IMR-90 (cell line): ENCODE measurements at regions of chr6 and their contacts with region 1.

Region 1: GRCh38 chr6:28981833-28982475 is 23.2 kb downstream of the ZNF311 start:
- DNase-seq: peak; percentile 87
- ATAC-seq: peak; percentile 65
- H3K4me3 ChIP-seq: peak overlapping the region; percentile 58
- H3K27ac ChIP-seq: no peak overlapping the region
- H3K4me1 ChIP-seq: peaks cover 2% of the 10 kb centered on the region; the same call in 1 of the 2 replicates
- H3K27me3 ChIP-seq: no peaks in the 10 kb centered on the region; the same call in 1 of the 2 replicates
- CTCF ChIP-seq: no peak
- POLR2A ChIP-seq: no peak
- RAD21 ChIP-seq: no peak

Region 2: DNA sequence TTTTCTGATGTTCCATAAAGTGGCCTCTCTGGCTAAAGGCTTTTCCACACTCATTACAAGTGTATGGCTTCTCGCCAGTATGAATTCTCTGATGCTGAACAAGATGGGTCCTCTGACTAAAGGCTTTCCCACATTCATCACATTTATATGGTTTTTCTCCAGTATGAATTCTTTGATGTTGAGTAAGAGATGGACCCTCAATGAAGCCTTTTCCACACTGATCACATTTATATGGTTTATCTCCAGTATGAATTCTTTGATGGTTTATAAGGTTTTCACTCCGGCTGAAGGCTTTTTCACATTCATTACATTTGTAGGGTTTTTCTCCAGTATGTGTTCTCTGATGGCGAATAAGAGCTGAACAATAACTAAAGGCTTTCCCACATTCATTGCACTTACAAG is 1529.5 kb before region 1 on chr6:
- CTCF ChIA-PET with region 1: no interaction called
- POLR2A ChIA-PET with region 1: no interaction called
- dilution Hi-C with region 1: no loop called
- in situ Hi-C with region 1: no loop called
- intact Hi-C with region 1: no loop called
- DNase-seq: peak; percentile 5
- ATAC-seq: no peak
- H3K4me3 ChIP-seq: no peak overlapping the region
- H3K27ac ChIP-seq: no peak overlapping the region
- H3K4me1 ChIP-seq: no peaks in the 10 kb centered on the region
- H3K27me3 ChIP-seq: no peaks in the 10 kb centered on the region
- CTCF ChIP-seq: no peak
- POLR2A ChIP-seq: no peak
- RAD21 ChIP-seq: no peak

Region 3: GRCh38 chr6:27893059-27893835 is 1088.7 kb before region 1 on chr6:
- CTCF ChIA-PET with region 1: no interaction called
- POLR2A ChIA-PET with region 1: no interaction called
- dilution Hi-C with region 1: no loop called
- in situ Hi-C with region 1: no loop called
- intact Hi-C with region 1: no loop called
- DNase-seq: peak; percentile 99
- ATAC-seq: peak; percentile 64
- H3K4me3 ChIP-seq: peak overlapping the region; percentile 67
- H3K27ac ChIP-seq: peak overlapping the region; percentile 48
- H3K4me1 ChIP-seq: peaks cover 5% of the 10 kb centered on the region
- H3K27me3 ChIP-seq: no peaks in the 10 kb centered on the region
- CTCF ChIP-seq: no peak
- POLR2A ChIP-seq: peak; percentile 99
- RAD21 ChIP-seq: no peak

Region 4: DNA sequence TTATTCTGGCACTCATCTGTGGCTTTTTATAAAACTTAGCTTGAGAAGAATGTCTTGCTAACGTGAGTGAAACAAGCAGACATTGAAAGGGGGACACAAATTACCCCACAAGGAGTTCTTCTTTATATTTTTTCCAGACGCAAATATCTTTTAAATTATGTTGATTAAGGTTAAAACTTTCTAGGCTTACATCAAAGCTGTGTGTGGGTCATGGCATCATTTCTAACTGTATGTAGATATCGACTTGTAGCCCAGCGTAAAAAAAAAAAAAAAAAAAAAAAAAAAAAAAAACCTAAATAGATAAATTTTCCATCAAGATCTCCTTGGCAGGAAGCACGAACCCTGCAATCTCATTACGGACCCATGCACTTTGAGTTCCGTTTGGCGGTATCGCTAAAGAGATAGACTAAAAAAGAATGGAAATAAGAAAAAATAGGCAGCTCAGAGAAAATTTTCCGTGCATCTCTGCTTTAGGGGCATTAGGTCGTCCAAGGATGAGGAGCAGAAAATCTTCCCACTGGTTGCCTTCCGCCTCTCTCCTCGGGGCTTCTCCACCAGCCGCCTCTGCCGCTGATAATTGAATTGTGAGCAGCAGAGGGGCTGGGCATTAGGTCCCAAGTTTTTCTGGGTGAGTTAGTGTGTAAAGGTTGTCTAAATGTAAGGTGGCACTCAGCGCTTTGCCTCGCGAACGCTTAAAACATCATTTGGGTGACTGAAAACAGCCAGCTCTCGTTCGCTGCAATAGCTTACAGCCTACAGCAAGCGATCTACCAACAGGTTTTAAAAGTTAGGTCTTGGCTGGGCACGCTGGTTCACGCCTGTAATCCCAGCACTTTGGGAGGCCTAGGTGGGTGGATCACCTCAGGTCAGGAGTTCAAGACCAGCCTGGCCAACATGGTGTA is 252.2 kb before region 1 on chr6:
- CTCF ChIA-PET with region 1: no interaction called
- POLR2A ChIA-PET with region 1: no interaction called
- dilution Hi-C with region 1: no loop called
- in situ Hi-C with region 1: no loop called
- intact Hi-C with region 1: loop called (anchors 1 kb)
- DNase-seq: no peak
- ATAC-seq: no peak
- H3K4me3 ChIP-seq: 0 out of 2 replicates have a peak overlapping the region, but pooled peaks have one; percentile 9
- H3K27ac ChIP-seq: no peak overlapping the region
- H3K4me1 ChIP-seq: no peaks in the 10 kb centered on the region
- H3K27me3 ChIP-seq: peaks cover 11% of the 10 kb centered on the region
- CTCF ChIP-seq: no peak
- POLR2A ChIP-seq: no peak
- RAD21 ChIP-seq: no peak

Region 5: DNA sequence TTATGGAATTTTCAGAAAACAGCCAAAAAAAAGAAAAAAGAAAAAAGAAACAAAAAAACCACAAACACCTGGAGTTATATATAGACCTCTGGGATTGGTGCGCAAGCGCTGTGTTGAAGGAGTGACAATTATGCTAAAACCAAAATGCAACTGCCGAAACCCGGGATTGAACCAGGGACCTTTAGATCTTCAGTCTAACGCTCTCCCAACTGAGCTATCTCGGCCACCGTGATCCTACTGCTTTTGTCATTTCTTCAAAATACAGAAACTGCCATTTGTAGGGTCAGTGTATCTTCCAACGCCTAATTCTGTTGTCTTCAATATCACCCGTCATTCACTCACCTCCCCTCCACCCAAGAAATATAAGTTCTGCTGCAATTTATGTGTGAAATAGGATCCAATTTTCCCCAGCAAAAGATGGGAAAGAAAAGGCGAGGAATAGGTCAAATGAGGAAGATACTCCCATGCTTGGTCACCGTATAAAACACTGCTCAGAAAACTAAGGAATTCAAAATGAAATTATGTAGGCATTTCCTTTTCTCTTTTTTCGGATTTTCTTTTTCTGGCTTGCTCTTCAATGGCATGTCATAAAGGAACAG is 174.2 kb before region 1 on chr6:
- CTCF ChIA-PET with region 1: no interaction called
- POLR2A ChIA-PET with region 1: no interaction called
- dilution Hi-C with region 1: no loop called
- in situ Hi-C with region 1: no loop called
- intact Hi-C with region 1: loop called (anchors 5 kb)
- DNase-seq: peak; percentile 69
- ATAC-seq: peak; percentile 87
- H3K4me3 ChIP-seq: peak overlapping the region; percentile 42; the same call in 1 of the 2 replicates
- H3K27ac ChIP-seq: no peak overlapping the region
- H3K4me1 ChIP-seq: no peaks in the 10 kb centered on the region
- H3K27me3 ChIP-seq: peaks cover 18% of the 10 kb centered on the region
- CTCF ChIP-seq: no peak
- POLR2A ChIP-seq: no peak
- RAD21 ChIP-seq: no peak

Region 6: GRCh38 chr6:28880894-28881780 is 100.8 kb before region 1 on chr6:
- CTCF ChIA-PET with region 1: no interaction called
- POLR2A ChIA-PET with region 1: no interaction called
- dilution Hi-C with region 1: no loop called
- in situ Hi-C with region 1: no loop called
- intact Hi-C with region 1: loop called (anchors 5 kb)
- DNase-seq: peak; percentile 75
- ATAC-seq: peak; percentile 98
- H3K4me3 ChIP-seq: peak overlapping the region; percentile 81
- H3K27ac ChIP-seq: 0 out of 2 replicates have a peak overlapping the region, but pooled peaks have one; percentile 23
- H3K4me1 ChIP-seq: no peaks in the 10 kb centered on the region
- H3K27me3 ChIP-seq: peaks cover 3% of the 10 kb centered on the region; the same call in 1 of the 2 replicates
- CTCF ChIP-seq: no peak
- POLR2A ChIP-seq: no peak
- RAD21 ChIP-seq: no peak

Region 7: DNA sequence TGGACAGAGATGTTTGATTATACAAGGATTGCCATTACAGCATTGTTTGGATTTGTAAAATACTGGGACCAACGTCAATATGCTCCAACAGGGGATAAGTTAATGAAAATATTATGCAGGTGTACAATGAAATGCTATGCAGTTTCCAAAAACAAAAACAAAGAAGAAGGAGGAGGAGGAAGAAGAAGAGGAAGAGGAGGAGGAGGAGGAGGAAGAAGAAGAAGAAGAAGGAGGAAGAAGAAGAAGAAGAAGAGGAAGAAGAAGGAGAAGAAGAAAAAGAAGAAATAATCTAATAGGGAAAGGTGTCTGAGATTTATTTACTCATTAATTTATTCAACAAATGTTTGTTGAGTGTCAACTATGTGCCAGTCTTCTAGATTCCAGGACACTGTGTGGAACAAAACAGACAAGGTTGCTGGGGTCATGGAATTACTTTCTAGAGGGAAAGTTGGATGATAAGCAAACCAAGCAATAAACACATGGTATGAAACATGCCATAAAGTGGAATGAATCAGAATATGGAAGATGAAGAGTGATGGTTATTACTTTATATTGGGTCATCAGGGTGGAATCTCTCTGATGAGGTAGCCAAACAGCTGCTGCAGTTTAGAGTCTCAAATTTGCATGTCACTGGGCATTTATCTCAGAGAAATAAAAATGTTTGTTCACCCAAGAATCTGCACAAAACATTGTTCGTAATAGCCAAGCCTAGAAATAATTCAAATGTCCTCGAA is 51.9 kb before region 1 on chr6:
- CTCF ChIA-PET with region 1: no interaction called
- POLR2A ChIA-PET with region 1: interaction called, 15 read pairs
- dilution Hi-C with region 1: no loop called
- in situ Hi-C with region 1: no loop called
- intact Hi-C with region 1: no loop called
- DNase-seq: no peak
- ATAC-seq: no peak
- H3K4me3 ChIP-seq: no peak overlapping the region
- H3K27ac ChIP-seq: no peak overlapping the region
- H3K4me1 ChIP-seq: no peaks in the 10 kb centered on the region
- H3K27me3 ChIP-seq: no peaks in the 10 kb centered on the region
- CTCF ChIP-seq: no peak
- POLR2A ChIP-seq: no peak
- RAD21 ChIP-seq: no peak

Region 8: GRCh38 chr6:28953039-28953584 is 28.8 kb before region 1 on chr6:
- CTCF ChIA-PET with region 1: no interaction called
- POLR2A ChIA-PET with region 1: no interaction called
- dilution Hi-C with region 1: no loop called
- in situ Hi-C with region 1: no loop called
- intact Hi-C with region 1: loop called (anchors 1 kb)
- DNase-seq: peak; percentile 72
- ATAC-seq: peak; percentile 90
- H3K4me3 ChIP-seq: peak overlapping the region; percentile 63
- H3K27ac ChIP-seq: no peak overlapping the region
- H3K4me1 ChIP-seq: no peaks in the 10 kb centered on the region; the same call in 1 of the 2 replicates
- H3K27me3 ChIP-seq: peaks cover 2% of the 10 kb centered on the region; the same call in 1 of the 2 replicates
- CTCF ChIP-seq: no peak
- POLR2A ChIP-seq: no peak
- RAD21 ChIP-seq: no peak

Region 9: GRCh38 chr6:29129326-29130012 is 147.5 kb after region 1 on chr6:
- CTCF ChIA-PET with region 1: no interaction called
- POLR2A ChIA-PET with region 1: no interaction called
- dilution Hi-C with region 1: no loop called
- in situ Hi-C with region 1: no loop called
- intact Hi-C with region 1: no loop called
- DNase-seq: no peak
- ATAC-seq: no peak
- H3K4me3 ChIP-seq: no peak overlapping the region
- H3K27ac ChIP-seq: no peak overlapping the region
- H3K4me1 ChIP-seq: no peaks in the 10 kb centered on the region
- H3K27me3 ChIP-seq: no peaks in the 10 kb centered on the region
- CTCF ChIP-seq: no peak
- POLR2A ChIP-seq: no peak
- RAD21 ChIP-seq: no peak

Region 10: DNA sequence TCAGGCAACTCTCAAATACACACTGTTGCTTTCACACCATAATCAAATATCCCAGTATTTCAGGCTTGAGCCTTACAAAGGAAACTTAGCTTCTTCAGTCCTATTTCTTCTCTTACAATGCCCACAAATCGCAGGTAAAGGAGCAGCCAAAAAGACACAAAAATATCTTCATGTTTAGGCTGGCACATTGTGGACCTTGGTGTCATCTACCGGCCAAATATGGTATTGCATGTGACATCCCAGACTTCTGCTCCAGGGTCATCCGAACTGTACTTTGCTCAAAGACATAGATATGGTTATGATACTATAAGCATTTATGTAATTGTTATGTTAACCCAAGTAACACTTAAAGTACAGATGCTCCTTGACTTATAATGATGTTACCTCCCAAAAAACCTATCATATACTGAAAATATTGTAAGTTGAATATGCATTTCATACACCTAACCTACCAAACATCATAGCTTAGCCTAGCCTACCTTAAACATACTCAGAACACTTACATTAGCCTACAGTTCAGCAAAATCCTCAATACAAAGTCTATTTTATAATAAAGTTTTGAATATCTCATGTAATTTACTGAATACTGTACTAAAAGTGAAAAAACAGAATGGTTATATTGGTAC is 607.6 kb after region 1 on chr6:
- CTCF ChIA-PET with region 1: no interaction called
- POLR2A ChIA-PET with region 1: no interaction called
- dilution Hi-C with region 1: no loop called
- in situ Hi-C with region 1: no loop called
- intact Hi-C with region 1: loop called (anchors 5 kb)
- DNase-seq: peak; percentile 47
- ATAC-seq: peak; percentile 94
- H3K4me3 ChIP-seq: no peak overlapping the region
- H3K27ac ChIP-seq: no peak overlapping the region
- H3K4me1 ChIP-seq: no peaks in the 10 kb centered on the region
- H3K27me3 ChIP-seq: no peaks in the 10 kb centered on the region
- CTCF ChIP-seq: peak; percentile 78
- POLR2A ChIP-seq: no peak
- RAD21 ChIP-seq: peak; percentile 78